Activated naive CD4-positive, alpha-beta T cell treated with anti-CD3 and anti-CD28 coated beads, Interleukin-2, amount 10 ng/mL, durations not matched to agents 7 days and 5 days (primary cell): ENCODE measurements at regions of chr9 and their contacts with region 1.

Region 1: GRCh38 chr9:133149126-133150107 is 14.3 kb downstream of the GBGT1 start:
- DNase-seq: peak; percentile 86
- H3K4me3 Mint-ChIP-seq: peak overlapping the region; percentile 70
- H3K27ac Mint-ChIP-seq: peak overlapping the region; percentile 84
- H3K4me1 Mint-ChIP-seq: peaks cover 49% of the 10 kb centered on the region
- H3K27me3 Mint-ChIP-seq: peaks cover 10% of the 10 kb centered on the region

Region 2: GRCh38 chr9:133023117-133023890 is 126.1 kb before region 1 on chr9:
- CTCF ChIA-PET with region 1: interaction called, 18 read pairs
- DNase-seq: peak; percentile 81
- H3K4me3 Mint-ChIP-seq: peak overlapping the region; percentile 35
- H3K27ac Mint-ChIP-seq: peak overlapping the region; percentile 28
- H3K4me1 Mint-ChIP-seq: peaks cover 28% of the 10 kb centered on the region
- H3K27me3 Mint-ChIP-seq: peaks cover 17% of the 10 kb centered on the region

Region 3: GRCh38 chr9:133030317-133031129 is 118.9 kb before region 1 on chr9 and contains the start of gene GTF3C5:
- CTCF ChIA-PET with region 1: interaction called, 14 read pairs
- DNase-seq: peak; percentile 95
- H3K4me3 Mint-ChIP-seq: peak within 1 kb of the TSS; percentile 96
- H3K27ac Mint-ChIP-seq: peak within 1 kb of the TSS; percentile 92
- H3K4me1 Mint-ChIP-seq: peaks cover 69% of the 10 kb centered on the region
- H3K27me3 Mint-ChIP-seq: peaks cover 4% of the 10 kb centered on the region

Region 4: GRCh38 chr9:133037775-133038515 is 111.5 kb before region 1 on chr9:
- CTCF ChIA-PET with region 1: interaction called, 39 read pairs
- DNase-seq: no peak
- H3K4me3 Mint-ChIP-seq: no peak overlapping the region
- H3K27ac Mint-ChIP-seq: no peak overlapping the region
- H3K4me1 Mint-ChIP-seq: peaks cover 20% of the 10 kb centered on the region
- H3K27me3 Mint-ChIP-seq: no peaks in the 10 kb centered on the region

Region 5: DNA sequence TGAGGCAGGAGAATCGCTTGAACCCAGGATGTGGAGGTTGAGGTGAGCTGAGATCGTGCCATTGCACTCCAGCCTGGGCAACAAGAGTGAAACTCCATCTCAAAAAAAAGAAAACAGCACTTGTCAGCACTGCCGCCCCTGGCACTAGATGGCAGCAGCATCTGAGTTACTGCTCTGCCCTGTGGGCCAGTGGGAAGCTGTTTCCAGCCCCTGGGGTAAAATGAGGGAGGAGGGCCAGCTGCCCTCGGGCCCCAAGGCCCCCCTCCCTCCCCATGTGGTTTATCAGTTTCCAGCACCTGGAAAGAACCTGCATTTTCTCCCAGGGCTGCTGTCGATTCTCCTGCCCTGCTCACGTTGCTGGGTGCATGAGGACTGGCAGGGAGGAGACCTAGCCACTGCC is 100.8 kb before region 1 on chr9:
- CTCF ChIA-PET with region 1: interaction called, 39 read pairs
- DNase-seq: peak; percentile 71
- H3K4me3 Mint-ChIP-seq: no peak overlapping the region
- H3K27ac Mint-ChIP-seq: no peak overlapping the region
- H3K4me1 Mint-ChIP-seq: peaks cover 2% of the 10 kb centered on the region
- H3K27me3 Mint-ChIP-seq: no peaks in the 10 kb centered on the region

Region 6: GRCh38 chr9:133103183-133103986 is 46.0 kb before region 1 on chr9:
- CTCF ChIA-PET with region 1: interaction called, 357 read pairs
- DNase-seq: peak; percentile 67
- H3K4me3 Mint-ChIP-seq: no peak overlapping the region
- H3K27ac Mint-ChIP-seq: peak overlapping the region; percentile 54
- H3K4me1 Mint-ChIP-seq: peaks cover 4% of the 10 kb centered on the region
- H3K27me3 Mint-ChIP-seq: no peaks in the 10 kb centered on the region